CD4-positive, alpha-beta T cell (primary cell): ENCODE measurements at regions of chr14 and their contacts with region 1.

Region 1: DNA sequence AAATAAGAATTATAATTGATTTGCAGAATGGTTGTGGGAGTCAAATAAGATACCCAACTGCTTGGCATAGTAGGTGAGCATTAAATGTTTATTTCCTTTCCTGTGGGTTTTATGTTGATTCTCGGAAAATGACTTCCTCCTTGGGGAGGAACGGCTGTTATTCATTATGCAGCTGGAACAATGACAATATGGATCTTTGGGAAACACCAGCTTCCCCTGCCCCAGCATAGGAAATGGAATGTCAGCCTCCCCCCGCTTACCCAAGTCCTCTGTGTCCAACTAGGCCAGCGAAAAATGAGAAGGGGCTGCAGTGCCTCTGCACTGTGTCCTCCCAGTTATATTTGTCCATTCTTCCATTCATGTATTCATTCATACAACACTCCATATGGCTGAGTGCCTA is 11.7 kb upstream of the CCDC177 start:
- DNase-seq: no peak
- ATAC-seq: no peak
- H3K4me3 ChIP-seq: no peak overlapping the region
- H3K4me3 Mint-ChIP-seq: no peak overlapping the region
- H3K27ac ChIP-seq: no peak overlapping the region
- H3K27ac Mint-ChIP-seq: no peak overlapping the region
- H3K4me1 ChIP-seq: no peaks in the 10 kb centered on the region
- H3K4me1 Mint-ChIP-seq: no peaks in the 10 kb centered on the region
- H3K27me3 ChIP-seq: no peaks in the 10 kb centered on the region
- H3K27me3 Mint-ChIP-seq: no peaks in the 10 kb centered on the region
- CTCF ChIP-seq: no peak

Region 2: DNA sequence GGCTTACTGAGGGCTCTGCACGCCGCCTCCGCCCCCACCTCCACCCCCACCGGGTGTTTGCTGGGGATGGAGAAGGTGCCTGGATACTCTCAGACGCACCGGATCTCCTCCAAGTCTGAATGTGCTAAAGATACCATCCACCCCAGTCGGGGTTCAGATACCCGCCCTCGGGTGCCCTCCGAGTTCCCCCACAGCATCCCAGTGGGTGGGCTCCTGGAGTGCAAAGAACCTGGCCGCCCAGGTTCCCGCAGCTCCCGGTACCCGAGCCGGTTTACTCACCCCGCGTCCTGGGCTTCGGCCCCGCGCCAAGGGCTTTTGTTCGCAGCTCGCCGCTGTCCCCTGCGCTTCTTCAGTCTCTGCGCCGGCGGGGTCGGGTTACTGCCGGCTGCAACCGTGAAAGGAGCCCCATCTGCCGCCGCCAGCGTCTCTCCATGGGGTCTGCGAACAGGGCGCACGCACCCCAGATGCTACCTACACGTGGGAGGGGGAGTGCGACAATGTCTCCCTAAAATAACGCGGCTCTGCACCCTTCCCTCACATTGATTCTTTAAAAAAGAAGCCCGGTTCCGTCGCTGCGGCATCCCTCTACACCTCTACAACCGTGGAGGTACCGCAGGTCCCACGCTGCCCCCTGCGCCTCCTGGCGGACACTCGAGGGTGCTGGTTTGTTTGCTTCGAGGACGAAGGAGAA is 12.0 kb before region 1 on chr14 and contains the start of gene CCDC177:
- CTCF ChIA-PET with region 1: interaction called, 11 read pairs
- POLR2A ChIA-PET with region 1: no interaction called
- intact Hi-C with region 1: no loop called
- DNase-seq: peak; percentile 56 to 83 (median 68)
- ATAC-seq: peak; percentile 87
- H3K4me3 ChIP-seq: peak within 1 kb of the TSS; percentile 55
- H3K4me3 Mint-ChIP-seq: peak within 1 kb of the TSS; percentile 83
- H3K27ac ChIP-seq: no peak within 1 kb of the TSS
- H3K27ac Mint-ChIP-seq: no peak within 1 kb of the TSS
- H3K4me1 ChIP-seq: peaks cover 29% of the 10 kb centered on the region
- H3K4me1 Mint-ChIP-seq: peaks cover 11% of the 10 kb centered on the region
- H3K27me3 ChIP-seq: peaks cover 36 to 49% of the 10 kb centered on the region in 2 experiments
- H3K27me3 Mint-ChIP-seq: peaks cover 61% of the 10 kb centered on the region
- CTCF ChIP-seq: peak; percentile 97
- total RNA-seq, gene CCDC177: not detected